ENCODE measurements at regions of chr22 and their contacts with region 1.

Region 1: GRCh38 chr22:37043828-37044538 is 7.6 kb upstream of the KCTD17 start:
- DNase-seq: peak; percentile 70
- H3K4me3 Mint-ChIP-seq: no peak overlapping the region
- H3K27ac Mint-ChIP-seq: no peak overlapping the region
- H3K4me1 Mint-ChIP-seq: peaks cover 21% of the 10 kb centered on the region
- H3K27me3 Mint-ChIP-seq: no peaks in the 10 kb centered on the region

Region 2: DNA sequence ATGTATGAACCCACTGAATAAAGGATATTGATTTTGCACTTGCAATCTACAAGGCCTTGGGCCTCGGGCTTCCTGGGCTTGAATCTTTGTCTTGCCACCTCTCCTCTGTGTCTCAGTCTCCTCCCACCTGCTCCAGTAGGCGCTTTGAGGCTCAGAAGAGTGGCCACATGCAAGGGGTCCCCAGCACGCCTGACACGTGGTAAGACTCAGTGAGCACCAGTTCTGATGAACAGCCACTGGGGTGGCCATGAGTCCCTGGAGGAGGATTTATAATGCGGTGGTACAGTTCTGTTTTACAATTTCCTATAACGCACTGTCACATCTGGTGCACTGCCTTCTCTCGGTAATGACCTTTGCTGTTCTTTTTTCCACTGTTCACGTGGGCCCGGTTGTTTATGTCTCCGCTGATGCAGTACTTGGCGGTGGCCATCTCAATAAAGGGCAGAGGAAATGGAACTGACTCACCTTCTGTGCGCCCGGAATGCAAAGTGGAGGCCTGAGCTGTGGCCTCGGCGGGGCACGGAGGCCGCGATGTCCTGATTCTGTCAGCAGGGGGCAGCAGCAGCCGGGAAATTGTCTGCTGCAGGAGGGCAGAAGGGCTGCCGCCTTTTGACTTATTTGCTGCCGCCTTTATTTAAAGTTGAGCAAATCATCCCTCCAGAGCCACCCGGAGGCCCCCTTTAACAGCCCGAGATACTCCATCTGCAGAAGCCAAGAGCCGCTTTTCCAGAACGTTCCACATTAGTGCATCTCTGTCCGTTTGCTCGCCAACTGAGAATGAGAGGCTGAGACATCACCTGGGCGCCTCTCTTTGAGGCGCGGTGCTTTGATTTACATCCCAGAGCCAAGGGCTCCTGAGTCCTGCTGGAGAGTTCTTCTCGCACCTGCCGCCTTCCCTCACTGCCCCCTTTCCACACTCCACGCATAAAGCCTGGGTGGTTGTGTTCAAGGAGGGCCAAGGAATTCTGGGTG is 262.0 kb before region 1 on chr22:
- CTCF ChIA-PET with region 1: no interaction called
- intact Hi-C with region 1: loop called (anchors 1 kb)
- DNase-seq: peak; percentile 94
- H3K4me3 Mint-ChIP-seq: peak overlapping the region; percentile 28
- H3K27ac Mint-ChIP-seq: peak overlapping the region; percentile 72
- H3K4me1 Mint-ChIP-seq: peaks cover 26% of the 10 kb centered on the region
- H3K27me3 Mint-ChIP-seq: peaks cover 3% of the 10 kb centered on the region

Region 3: GRCh38 chr22:36986242-36986821 is 57.7 kb before region 1 on chr22:
- CTCF ChIA-PET with region 1: interaction called, 3 read pairs
- intact Hi-C with region 1: loop called (anchors 1 kb)
- DNase-seq: peak; percentile 79
- H3K4me3 Mint-ChIP-seq: no peak overlapping the region
- H3K27ac Mint-ChIP-seq: no peak overlapping the region
- H3K4me1 Mint-ChIP-seq: no peaks in the 10 kb centered on the region
- H3K27me3 Mint-ChIP-seq: peaks cover 18% of the 10 kb centered on the region

Region 4: GRCh38 chr22:37019309-37020125 is 24.5 kb before region 1 on chr22 and contains the starts of genes MPST and TST:
- CTCF ChIA-PET with region 1: interaction called, 15 read pairs
- intact Hi-C with region 1: no loop called
- DNase-seq: peak; percentile 18
- H3K4me3 Mint-ChIP-seq: peak within 1 kb of the TSS; percentile 70
- H3K27ac Mint-ChIP-seq: no peak within 1 kb of the TSS
- H3K4me1 Mint-ChIP-seq: peaks cover 4% of the 10 kb centered on the region
- H3K27me3 Mint-ChIP-seq: peaks cover 24% of the 10 kb centered on the region
- total RNA-seq, gene MPST: 2.8 to 2.9 TPM
- total RNA-seq, gene TST: 0.38 to 0.44 TPM

Region 5: GRCh38 chr22:37121887-37122591 is 78.1 kb after region 1 on chr22:
- CTCF ChIA-PET with region 1: interaction called, 10 read pairs
- intact Hi-C with region 1: no loop called
- DNase-seq: peak; percentile 98
- H3K4me3 Mint-ChIP-seq: peak overlapping the region; percentile 85
- H3K27ac Mint-ChIP-seq: peak overlapping the region; percentile 99
- H3K4me1 Mint-ChIP-seq: peaks cover 73% of the 10 kb centered on the region
- H3K27me3 Mint-ChIP-seq: no peaks in the 10 kb centered on the region